ENCODE measurements at regions of chr18 and their contacts with region 1.

Region 1: GRCh38 chr18:3297025-3297984 is 35.4 kb downstream of the MYL12B start:
- DNase-seq: peak; percentile 97
- H3K4me3 Mint-ChIP-seq: peak overlapping the region; percentile 87
- H3K27ac Mint-ChIP-seq: peak overlapping the region; percentile 52
- H3K4me1 Mint-ChIP-seq: peaks cover 8% of the 10 kb centered on the region
- H3K27me3 Mint-ChIP-seq: peaks cover 17% of the 10 kb centered on the region

Region 2: DNA sequence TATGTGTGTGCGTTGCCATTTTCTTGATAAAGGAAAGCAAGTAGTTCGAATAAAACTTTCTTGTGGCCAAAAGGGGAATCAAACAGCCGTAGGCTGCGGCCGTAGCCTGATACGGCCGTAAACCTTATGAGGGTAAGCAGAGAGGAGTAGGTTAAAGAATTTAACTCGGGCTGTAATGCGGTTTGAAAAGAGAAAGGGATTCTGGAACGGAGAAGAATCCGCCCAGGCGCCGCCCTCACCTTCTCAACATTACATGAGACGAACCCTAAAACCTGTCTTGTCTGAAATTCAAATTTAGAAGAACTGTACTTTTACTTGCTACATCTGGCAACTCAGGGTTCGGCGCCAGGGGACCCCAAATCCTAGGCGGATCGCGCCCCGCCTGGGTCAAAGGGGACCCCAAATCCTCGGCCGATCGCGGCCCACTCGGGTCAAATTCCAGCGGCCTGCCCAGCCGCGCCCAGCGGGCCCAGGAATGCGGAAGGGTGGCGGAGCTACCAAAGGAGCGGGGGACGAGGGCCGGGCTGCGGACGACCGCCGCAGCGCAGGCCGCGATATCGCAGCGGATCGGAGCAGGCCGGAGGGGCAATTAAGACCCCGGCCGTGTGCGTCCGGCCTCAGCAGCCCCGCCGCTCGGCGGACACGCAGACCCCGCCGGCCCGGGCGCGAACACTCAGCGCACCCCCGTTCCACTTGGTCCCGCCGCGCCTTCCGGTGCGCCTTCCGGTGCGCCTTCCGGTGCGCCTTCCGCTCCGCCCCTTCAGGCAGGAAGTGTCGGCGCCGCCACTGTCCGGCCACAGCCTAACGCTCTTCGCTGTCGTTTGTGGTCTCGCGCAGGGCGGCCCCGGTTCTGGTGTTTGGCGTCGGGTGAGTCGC is 35.7 kb before region 1 on chr18 and contains the start of gene MYL12B:
- CTCF ChIA-PET with region 1: interaction called, 8 read pairs
- POLR2A ChIA-PET with region 1: interaction called, 7 read pairs
- intact Hi-C with region 1: loop called (anchors 1 kb)
- DNase-seq: peak; percentile 85
- H3K4me3 Mint-ChIP-seq: peak within 1 kb of the TSS; percentile 89
- H3K27ac Mint-ChIP-seq: peak within 1 kb of the TSS; percentile 95
- H3K4me1 Mint-ChIP-seq: peaks cover 62% of the 10 kb centered on the region
- H3K27me3 Mint-ChIP-seq: no peaks in the 10 kb centered on the region
- total RNA-seq, gene MYL12B: 335 to 339 TPM

Region 3: DNA sequence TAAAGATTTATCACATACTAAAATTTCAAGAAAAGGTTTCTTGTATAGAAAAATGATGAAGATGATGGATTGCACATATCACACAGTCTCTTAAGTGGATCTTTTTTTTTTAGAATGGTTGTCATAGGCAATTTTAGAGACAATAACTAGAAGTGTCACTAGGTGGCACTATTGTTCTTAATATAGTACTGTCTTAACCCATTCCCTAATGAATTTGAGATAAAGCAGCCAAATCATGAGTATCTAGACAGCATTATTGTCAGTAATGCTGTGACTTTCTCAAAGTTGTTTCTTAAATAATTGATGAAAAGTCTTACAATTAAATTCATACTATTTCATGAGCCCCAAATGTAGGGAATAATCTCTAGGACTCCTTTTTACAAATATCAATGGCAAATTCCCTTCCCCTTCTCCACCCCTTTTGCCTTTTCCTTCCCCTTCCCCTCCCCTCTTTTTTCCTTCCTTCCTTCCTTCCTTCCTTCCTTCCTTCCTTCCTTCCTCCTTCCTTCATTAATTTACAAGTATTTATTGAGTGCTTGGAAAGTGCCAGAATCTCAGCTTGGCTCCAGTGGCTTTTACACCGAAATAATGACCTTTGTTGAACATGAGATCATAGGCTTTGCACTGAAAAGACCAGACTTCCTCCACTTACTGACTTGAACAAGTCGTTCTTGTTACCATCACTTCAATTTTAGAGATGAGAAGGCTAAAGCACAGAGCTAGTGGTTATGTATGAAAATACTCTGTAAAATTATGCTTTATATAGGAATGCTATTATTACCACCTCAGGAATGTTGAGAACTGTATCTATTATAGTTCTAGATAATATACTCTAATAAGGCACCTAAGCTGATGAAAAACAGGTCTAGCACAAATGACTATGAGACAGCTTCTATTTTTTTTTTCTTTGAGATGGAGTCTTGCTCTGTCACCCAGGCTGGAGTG is 15.6 kb before region 1 on chr18:
- CTCF ChIA-PET with region 1: interaction called, 40 read pairs
- POLR2A ChIA-PET with region 1: interaction called, 3 read pairs
- intact Hi-C with region 1: loop called (anchors 2 kb)
- DNase-seq: no peak
- H3K4me3 Mint-ChIP-seq: no peak overlapping the region
- H3K27ac Mint-ChIP-seq: no peak overlapping the region
- H3K4me1 Mint-ChIP-seq: peaks cover 6% of the 10 kb centered on the region
- H3K27me3 Mint-ChIP-seq: no peaks in the 10 kb centered on the region

Region 4: DNA sequence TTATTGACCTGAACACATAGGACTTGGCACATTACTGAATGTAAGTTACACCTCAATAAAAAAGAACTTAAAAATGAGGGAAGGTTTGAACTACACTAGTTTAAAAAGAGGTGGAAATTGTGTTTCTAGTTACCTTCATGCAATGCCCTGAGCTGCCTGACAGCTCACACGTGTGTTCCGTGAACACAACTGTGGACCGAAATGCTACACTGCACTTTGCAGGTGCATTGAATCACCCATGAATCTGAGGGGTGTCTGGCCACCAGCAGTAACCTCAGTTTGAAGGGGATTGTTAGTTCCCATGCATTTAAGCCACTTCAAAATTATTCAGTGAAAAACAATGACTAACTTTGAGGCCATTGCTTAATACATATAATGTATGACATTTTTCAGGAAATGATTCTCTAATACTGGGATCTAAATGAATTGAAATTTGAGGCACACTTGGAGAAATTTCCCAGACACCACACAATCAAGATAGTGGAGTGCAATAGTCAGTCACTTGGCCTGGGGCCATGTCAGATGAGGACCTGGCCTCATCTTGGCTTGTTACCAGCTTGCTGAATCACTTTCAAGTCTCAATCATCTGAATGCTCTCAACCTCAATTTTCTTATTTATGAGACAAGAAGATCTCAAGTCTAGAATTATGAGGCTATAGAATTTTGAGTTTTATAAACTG is 24.0 kb after region 1 on chr18:
- CTCF ChIA-PET with region 1: interaction called, 14 read pairs
- POLR2A ChIA-PET with region 1: no interaction called
- intact Hi-C with region 1: loop called (anchors 1 kb)
- DNase-seq: peak; percentile 56
- H3K4me3 Mint-ChIP-seq: no peak overlapping the region
- H3K27ac Mint-ChIP-seq: no peak overlapping the region
- H3K4me1 Mint-ChIP-seq: peaks cover 32% of the 10 kb centered on the region
- H3K27me3 Mint-ChIP-seq: peaks cover 7% of the 10 kb centered on the region

Region 5: GRCh38 chr18:3411854-3412268 is 114.6 kb after region 1 on chr18:
- CTCF ChIA-PET with region 1: no interaction called
- POLR2A ChIA-PET with region 1: no interaction called
- intact Hi-C with region 1: loop called (anchors 1 kb)
- DNase-seq: peak; percentile 42
- H3K4me3 Mint-ChIP-seq: peak overlapping the region; percentile 25
- H3K27ac Mint-ChIP-seq: peak overlapping the region; percentile 8
- H3K4me1 Mint-ChIP-seq: peaks cover 16% of the 10 kb centered on the region
- H3K27me3 Mint-ChIP-seq: no peaks in the 10 kb centered on the region

Region 6: GRCh38 chr18:3604498-3605408 is 307.4 kb after region 1 on chr18:
- CTCF ChIA-PET with region 1: interaction called, 10 read pairs
- POLR2A ChIA-PET with region 1: no interaction called
- intact Hi-C with region 1: no loop called
- DNase-seq: peak; percentile 58
- H3K4me3 Mint-ChIP-seq: no peak overlapping the region
- H3K27ac Mint-ChIP-seq: no peak overlapping the region
- H3K4me1 Mint-ChIP-seq: peaks cover 15% of the 10 kb centered on the region
- H3K27me3 Mint-ChIP-seq: no peaks in the 10 kb centered on the region